Heart right ventricle (tissue), 16 donors: ENCODE measurements at regions of chr10 and their contacts with region 1.

Region 1: GRCh38 chr10:92880233-92880861 is 32.0 kb downstream of the EXOC6 start:
- DNase-seq: peak in 1 of 2 donors; percentile 41
- ATAC-seq: peak in 7 of 8 donors; percentile 29 to 76 (median 67)
- H3K4me3 ChIP-seq: no peak overlapping the region
- H3K27ac ChIP-seq: no peak overlapping the region
- H3K4me1 ChIP-seq: peaks cover 0 to 28% (median 14%) of the 10 kb centered on the region in 9 donors
- H3K27me3 ChIP-seq: no peaks in the 10 kb centered on the region
- CTCF ChIP-seq: peak in 8 of 9 donors; percentile 31 to 75 (median 64)

Region 2: GRCh38 chr10:92517034-92517655 is 363.2 kb before region 1 on chr10:
- intact Hi-C with region 1: loop called in 8 of 10 experiments (anchors 2 to 10 kb)
- DNase-seq: peak in 1 of 2 donors; percentile 68
- ATAC-seq: peak; percentile 65 to 86 (median 82)
- H3K4me3 ChIP-seq: peak overlapping the region in 1 of 10 donors; percentile 5
- H3K27ac ChIP-seq: no peak overlapping the region
- H3K4me1 ChIP-seq: peaks cover 0 to 6% (median 0%) of the 10 kb centered on the region in 9 donors
- H3K27me3 ChIP-seq: no peaks in the 10 kb centered on the region
- CTCF ChIP-seq: peak; percentile 69 to 90 (median 82)

Region 3: GRCh38 chr10:92742331-92743228 is 137.8 kb before region 1 on chr10:
- intact Hi-C with region 1: no loop called
- DNase-seq: no peak
- ATAC-seq: peak in 2 of 8 donors; percentile 29 to 37
- H3K4me3 ChIP-seq: no peak overlapping the region
- H3K27ac ChIP-seq: no peak overlapping the region
- H3K4me1 ChIP-seq: peaks cover 0 to 14% (median 0%) of the 10 kb centered on the region in 9 donors
- H3K27me3 ChIP-seq: peaks cover 0 to 6% (median 0%) of the 10 kb centered on the region in 7 donors
- CTCF ChIP-seq: no peak

Region 4: DNA sequence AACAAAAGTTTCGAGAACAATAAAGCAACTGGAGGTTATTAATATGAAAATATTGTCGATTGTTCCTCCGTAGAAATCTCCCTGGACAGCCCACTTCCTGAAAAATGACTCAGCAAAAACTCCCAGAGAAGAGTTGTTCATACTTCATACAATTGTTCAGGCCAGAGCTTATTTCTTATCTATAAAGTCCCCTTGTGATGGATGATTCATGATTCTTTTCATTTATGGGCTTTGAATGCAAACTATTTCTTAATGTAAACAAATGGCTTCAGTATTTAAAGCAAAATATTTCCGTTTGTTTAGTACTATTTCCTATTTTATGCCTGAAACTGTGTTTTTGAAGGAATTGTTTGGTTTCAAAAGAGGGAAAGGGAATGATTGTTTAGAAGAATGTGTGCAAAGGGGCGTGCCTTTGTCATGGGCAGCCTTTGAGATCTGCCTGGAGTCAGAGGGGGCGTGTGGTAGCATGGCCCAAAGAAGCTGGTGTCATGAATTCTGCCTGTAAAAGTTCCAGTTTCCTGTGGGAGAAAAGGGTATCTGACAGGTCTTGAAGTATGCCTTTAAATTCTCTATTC is 58.2 kb before region 1 on chr10:
- intact Hi-C with region 1: loop called in 3 of 10 experiments (anchors 2 to 10 kb)
- DNase-seq: no peak
- ATAC-seq: peak in 7 of 8 donors; percentile 58 to 91 (median 78)
- H3K4me3 ChIP-seq: no peak overlapping the region
- H3K27ac ChIP-seq: peak overlapping the region in 6 of 10 donors; percentile 12 to 74 (median 61)
- H3K4me1 ChIP-seq: peaks cover 0 to 27% (median 10%) of the 10 kb centered on the region in 9 donors
- H3K27me3 ChIP-seq: no peaks in the 10 kb centered on the region
- CTCF ChIP-seq: no peak

Region 5: GRCh38 chr10:92848441-92849233 is 31.7 kb before region 1 on chr10 and contains the start of gene EXOC6:
- intact Hi-C with region 1: loop called in 7 of 10 experiments (anchors 1 to 5 kb)
- DNase-seq: peak; percentile 84 to 85
- ATAC-seq: peak; percentile 84 to 95 (median 92)
- H3K4me3 ChIP-seq: peak within 1 kb of the TSS; percentile 70 to 100 (median 96)
- H3K27ac ChIP-seq: peak within 1 kb of the TSS; percentile 73 to 94 (median 92)
- H3K4me1 ChIP-seq: peaks cover 0 to 38% (median 10%) of the 10 kb centered on the region in 9 donors
- H3K27me3 ChIP-seq: no peaks in the 10 kb centered on the region
- CTCF ChIP-seq: peak in 5 of 9 donors; percentile 2 to 20 (median 14)
- total RNA-seq, gene EXOC6: 8.7 to 11.7 (median 9.5) TPM

Region 6: GRCh38 chr10:93352638-93353383 is 472.5 kb after region 1 on chr10:
- intact Hi-C with region 1: loop called in 2 of 10 experiments (anchors 10 kb)
- DNase-seq: no peak
- ATAC-seq: peak in 2 of 8 donors; percentile 28 to 46
- H3K4me3 ChIP-seq: no peak overlapping the region
- H3K27ac ChIP-seq: no peak overlapping the region
- H3K4me1 ChIP-seq: no peaks in the 10 kb centered on the region
- H3K27me3 ChIP-seq: no peaks in the 10 kb centered on the region
- CTCF ChIP-seq: peak; percentile 55 to 81 (median 73)